ENCODE measurements at regions of chr17 and their contacts with region 1.

Region 1: DNA sequence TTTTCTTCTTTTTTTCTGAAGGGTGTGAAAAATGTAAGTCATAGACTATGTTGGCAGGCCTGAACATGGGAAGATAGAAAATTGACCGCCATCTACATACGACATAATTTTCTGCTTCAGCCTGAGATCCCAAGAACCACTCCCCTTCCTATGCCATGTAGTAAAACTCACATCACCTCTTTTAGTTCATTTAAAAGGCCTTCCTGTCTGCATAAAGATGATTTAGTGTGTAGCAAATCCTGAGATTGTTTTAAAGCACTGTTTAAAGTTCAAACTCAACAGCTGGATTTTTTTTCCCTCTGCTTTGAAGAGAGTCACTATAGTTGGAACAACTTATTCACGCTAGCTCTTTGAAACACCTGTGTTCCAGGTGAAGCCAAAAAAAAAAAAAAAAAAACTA is 101.5 kb downstream of the NLK start:
- DNase-seq: no peak
- H3K4me3 ChIP-seq: no peak overlapping the region
- H3K27ac ChIP-seq: no peak overlapping the region
- H3K4me1 ChIP-seq: no peaks in the 10 kb centered on the region
- H3K27me3 ChIP-seq: no peaks in the 10 kb centered on the region
- CTCF ChIP-seq: no peak

Region 2: GRCh38 chr17:28125530-28126378 is 18.3 kb before region 1 on chr17:
- CTCF ChIA-PET with region 1: no interaction called
- POLR2A ChIA-PET with region 1: interaction called, 25 read pairs
- intact Hi-C with region 1: no loop called
- DNase-seq: no peak
- H3K4me3 ChIP-seq: no peak overlapping the region
- H3K27ac ChIP-seq: no peak overlapping the region
- H3K4me1 ChIP-seq: no peaks in the 10 kb centered on the region
- H3K27me3 ChIP-seq: no peaks in the 10 kb centered on the region
- CTCF ChIP-seq: no peak

Region 3: GRCh38 chr17:28161311-28161710 is 17.3 kb after region 1 on chr17:
- CTCF ChIA-PET with region 1: interaction called, 16 read pairs
- POLR2A ChIA-PET with region 1: no interaction called
- intact Hi-C with region 1: no loop called
- DNase-seq: no peak
- H3K4me3 ChIP-seq: no peak overlapping the region
- H3K27ac ChIP-seq: no peak overlapping the region
- H3K4me1 ChIP-seq: no peaks in the 10 kb centered on the region
- H3K27me3 ChIP-seq: no peaks in the 10 kb centered on the region
- CTCF ChIP-seq: no peak

Region 4: GRCh38 chr17:28357061-28357900 is 213.3 kb after region 1 on chr17 and contains the start of gene POLDIP2:
- CTCF ChIA-PET with region 1: no interaction called
- POLR2A ChIA-PET with region 1: no interaction called
- intact Hi-C with region 1: no loop called
- DNase-seq: peak; percentile 87 to 94
- H3K4me3 ChIP-seq: peak within 1 kb of the TSS; percentile 84
- H3K27ac ChIP-seq: peak within 1 kb of the TSS; percentile 23; the same call in 1 of the 2 replicates
- H3K4me1 ChIP-seq: peaks cover 19% of the 10 kb centered on the region
- H3K27me3 ChIP-seq: no peaks in the 10 kb centered on the region
- CTCF ChIP-seq: no peak
- total RNA-seq, gene POLDIP2: 84.5 and 98.2 TPM in 2 replicates

Region 5: GRCh38 chr17:28426081-28426519 is 282.1 kb after region 1 on chr17:
- CTCF ChIA-PET with region 1: no interaction called
- POLR2A ChIA-PET with region 1: no interaction called
- intact Hi-C with region 1: no loop called
- DNase-seq: no peak
- H3K4me3 ChIP-seq: no peak overlapping the region
- H3K27ac ChIP-seq: no peak overlapping the region
- H3K4me1 ChIP-seq: no peaks in the 10 kb centered on the region
- H3K27me3 ChIP-seq: no peaks in the 10 kb centered on the region
- CTCF ChIP-seq: peak; percentile 61